Kidney (tissue), 22 donors: ENCODE measurements at regions of chr22 and their contacts with region 1.

Region 1: DNA sequence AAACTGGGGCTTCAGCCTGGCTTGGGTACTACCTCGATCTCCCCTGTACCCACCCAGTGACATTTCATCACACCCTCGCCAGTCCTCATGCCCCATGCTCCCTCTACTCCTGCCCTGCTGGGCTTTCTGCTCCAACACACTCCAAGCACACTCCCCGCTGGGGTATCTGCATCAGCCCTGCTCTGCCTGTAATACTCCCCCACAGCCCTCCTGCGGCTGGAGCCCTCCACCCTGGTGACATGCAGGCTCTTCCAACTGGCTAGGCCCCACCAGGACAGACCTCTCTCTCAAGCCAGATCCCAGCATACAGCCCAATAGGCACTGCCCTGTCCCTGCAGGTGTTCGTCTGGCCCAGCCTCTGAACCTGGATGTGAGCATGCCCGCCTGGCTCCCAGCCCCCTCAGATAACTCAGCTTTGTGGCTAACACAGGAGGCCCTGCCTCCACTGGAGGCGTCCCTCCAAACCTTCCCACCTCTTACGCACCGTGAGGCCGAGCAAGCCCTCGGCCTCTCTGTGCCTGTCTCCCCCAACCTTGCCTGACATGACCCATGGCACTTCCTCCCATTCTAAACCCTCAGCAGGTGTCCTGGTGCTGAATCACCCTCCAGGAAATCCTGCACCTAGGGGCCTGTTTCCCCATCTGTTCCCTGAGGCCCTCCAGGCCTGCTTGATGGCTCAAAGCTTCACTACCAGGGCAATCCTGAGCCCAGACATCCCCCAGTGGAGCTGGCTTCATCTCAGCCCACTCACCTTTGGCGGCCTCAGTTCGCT is 33.5 kb upstream of the TXNRD2 start:
- DNase-seq: peak in 2 of 5 donors; percentile 37 to 38
- H3K4me3 ChIP-seq: no peak overlapping the region
- H3K27ac ChIP-seq: no peak overlapping the region
- H3K4me1 ChIP-seq: peaks cover 0 to 14% (median 0%) of the 10 kb centered on the region in 3 donors
- H3K27me3 ChIP-seq: no peaks in the 10 kb centered on the region
- CTCF ChIP-seq: no peak

Region 2: GRCh38 chr22:20013382-20013871 is 38.3 kb after region 1 on chr22:
- intact Hi-C with region 1: loop called (anchors 5 kb)
- DNase-seq: peak; percentile 83 to 91 (median 88)
- H3K4me3 ChIP-seq: no peak overlapping the region
- H3K27ac ChIP-seq: no peak overlapping the region
- H3K4me1 ChIP-seq: peaks cover 0 to 27% (median 11%) of the 10 kb centered on the region in 3 donors
- H3K27me3 ChIP-seq: peaks cover 11% of the 10 kb centered on the region
- CTCF ChIP-seq: peak; percentile 86

Region 3: GRCh38 chr22:20514658-20515406 is 539.7 kb after region 1 on chr22:
- intact Hi-C with region 1: no loop called
- DNase-seq: peak in 1 of 5 donors; percentile 10
- H3K4me3 ChIP-seq: no peak overlapping the region
- H3K27ac ChIP-seq: no peak overlapping the region
- H3K4me1 ChIP-seq: peaks cover 0 to 13% (median 9%) of the 10 kb centered on the region in 3 donors
- H3K27me3 ChIP-seq: no peaks in the 10 kb centered on the region
- CTCF ChIP-seq: no peak